Dorsolateral prefrontal cortex (tissue), 120 donors: ENCODE measurements at regions of chr15 and their contacts with region 1.

Region 1: GRCh38 chr15:51132384-51133139 is 37.9 kb upstream of the TNFAIP8L3 start:
- DNase-seq: peak in 5 of 10 donors; percentile 39 to 65 (median 51)
- H3K4me3 ChIP-seq: no peak overlapping the region
- H3K27ac ChIP-seq: peak overlapping the region in 36 of 59 donors; percentile 1 to 67 (median 45)
- H3K27me3 ChIP-seq: no peaks in the 10 kb centered on the region
- CTCF ChIP-seq: peak; percentile 56 to 94 (median 85)

Region 2: GRCh38 chr15:51192521-51193280 is 60.1 kb after region 1 on chr15:
- intact Hi-C with region 1: loop called (anchors 2 to 5 kb)
- DNase-seq: peak; percentile 69 to 96 (median 94)
- H3K4me3 ChIP-seq: peak overlapping the region in 1 of 59 donors; percentile 10
- H3K27ac ChIP-seq: peak overlapping the region in 2 of 59 donors; percentile 16 to 40
- H3K27me3 ChIP-seq: no peaks in the 10 kb centered on the region
- CTCF ChIP-seq: peak; percentile 93 to 99 (median 98)

Region 3: GRCh38 chr15:51401872-51402517 is 269.4 kb after region 1 on chr15:
- intact Hi-C with region 1: loop called in 1 of 2 experiments (anchors 10 kb)
- DNase-seq: peak in 7 of 10 donors; percentile 23 to 69 (median 51)
- H3K4me3 ChIP-seq: no peak overlapping the region
- H3K27ac ChIP-seq: peak overlapping the region in 2 of 59 donors; percentile 3 to 8
- H3K27me3 ChIP-seq: no peaks in the 10 kb centered on the region
- CTCF ChIP-seq: peak; percentile 44 to 77 (median 64)